ENCODE measurements at regions of chr12 and their contacts with region 1.

Region 1: GRCh38 chr12:9763025-9763424 is 2.3 kb upstream of the CD69 start:
- DNase-seq: no peak
- H3K4me3 ChIP-seq: no peak overlapping the region
- H3K27ac ChIP-seq: no peak overlapping the region
- H3K4me1 ChIP-seq: no peaks in the 10 kb centered on the region
- H3K27me3 ChIP-seq: no peaks in the 10 kb centered on the region
- CTCF ChIP-seq: no peak
- POLR2A ChIP-seq: no peak

Region 2: GRCh38 chr12:9750276-9751203 is 12.5 kb before region 1 on chr12:
- intact Hi-C with region 1: loop called (anchors 2 kb)
- DNase-seq: peak in 1 of 2 donors; percentile 27
- H3K4me3 ChIP-seq: peak overlapping the region in 1 of 3 donors; percentile 15
- H3K27ac ChIP-seq: no peak overlapping the region
- H3K4me1 ChIP-seq: no peaks in the 10 kb centered on the region
- H3K27me3 ChIP-seq: no peaks in the 10 kb centered on the region
- CTCF ChIP-seq: peak; percentile 65 to 73 (median 70)
- POLR2A ChIP-seq: no peak

Measured in breast epithelium (tissue), 4 donors.